ENCODE measurements at regions of chr12 and their contacts with region 1.

Region 1: GRCh38 chr12:642633-643474 is 20.4 kb downstream of the NINJ2 start:
- DNase-seq: peak; percentile 78
- H3K4me3 Mint-ChIP-seq: peak overlapping the region; percentile 84
- H3K27ac Mint-ChIP-seq: peak overlapping the region; percentile 95
- H3K4me1 Mint-ChIP-seq: peaks cover 63% of the 10 kb centered on the region
- H3K27me3 Mint-ChIP-seq: no peaks in the 10 kb centered on the region

Region 2: GRCh38 chr12:575948-576612 is 66.8 kb before region 1 on chr12:
- intact Hi-C with region 1: loop called (anchors 1 kb)
- DNase-seq: peak; percentile 81
- H3K4me3 Mint-ChIP-seq: no peak overlapping the region
- H3K27ac Mint-ChIP-seq: peak overlapping the region; percentile 80
- H3K4me1 Mint-ChIP-seq: peaks cover 33% of the 10 kb centered on the region
- H3K27me3 Mint-ChIP-seq: peaks cover 4% of the 10 kb centered on the region

Region 3: DNA sequence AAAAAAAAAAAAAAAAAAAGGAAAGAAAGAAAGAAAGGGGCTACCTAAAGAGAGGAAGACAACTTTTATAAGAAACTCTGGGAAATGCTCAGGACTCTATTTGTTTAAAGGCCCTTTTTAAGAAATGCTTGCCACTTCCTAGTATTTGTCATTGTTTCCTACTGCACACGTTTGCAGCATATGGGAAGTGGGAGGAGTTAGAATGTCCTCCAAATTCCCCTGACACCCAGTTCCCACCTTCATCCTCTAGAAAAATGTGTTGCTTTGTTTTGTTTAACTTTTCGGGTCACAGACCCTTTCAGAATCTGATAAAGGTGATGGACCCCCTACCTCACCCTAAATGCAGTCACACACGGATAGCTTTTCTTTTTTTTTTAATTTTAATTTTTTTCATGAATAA is 20.4 kb before region 1 on chr12:
- intact Hi-C with region 1: loop called (anchors 1 kb)
- DNase-seq: peak; percentile 28
- H3K4me3 Mint-ChIP-seq: peak overlapping the region; percentile 68
- H3K27ac Mint-ChIP-seq: peak overlapping the region; percentile 96
- H3K4me1 Mint-ChIP-seq: peaks cover 62% of the 10 kb centered on the region
- H3K27me3 Mint-ChIP-seq: no peaks in the 10 kb centered on the region

Region 4: GRCh38 chr12:668090-668481 is 25.2 kb after region 1 on chr12:
- intact Hi-C with region 1: loop called (anchors 1 kb)
- DNase-seq: no peak
- H3K4me3 Mint-ChIP-seq: no peak overlapping the region
- H3K27ac Mint-ChIP-seq: peak overlapping the region; percentile 67
- H3K4me1 Mint-ChIP-seq: peaks cover 79% of the 10 kb centered on the region
- H3K27me3 Mint-ChIP-seq: no peaks in the 10 kb centered on the region

Region 5: GRCh38 chr12:712172-712863 is 69.5 kb after region 1 on chr12:
- intact Hi-C with region 1: loop called (anchors 2 kb)
- DNase-seq: no peak
- H3K4me3 Mint-ChIP-seq: no peak overlapping the region
- H3K27ac Mint-ChIP-seq: peak overlapping the region; percentile 72
- H3K4me1 Mint-ChIP-seq: peaks cover 37% of the 10 kb centered on the region
- H3K27me3 Mint-ChIP-seq: no peaks in the 10 kb centered on the region

Region 6: DNA sequence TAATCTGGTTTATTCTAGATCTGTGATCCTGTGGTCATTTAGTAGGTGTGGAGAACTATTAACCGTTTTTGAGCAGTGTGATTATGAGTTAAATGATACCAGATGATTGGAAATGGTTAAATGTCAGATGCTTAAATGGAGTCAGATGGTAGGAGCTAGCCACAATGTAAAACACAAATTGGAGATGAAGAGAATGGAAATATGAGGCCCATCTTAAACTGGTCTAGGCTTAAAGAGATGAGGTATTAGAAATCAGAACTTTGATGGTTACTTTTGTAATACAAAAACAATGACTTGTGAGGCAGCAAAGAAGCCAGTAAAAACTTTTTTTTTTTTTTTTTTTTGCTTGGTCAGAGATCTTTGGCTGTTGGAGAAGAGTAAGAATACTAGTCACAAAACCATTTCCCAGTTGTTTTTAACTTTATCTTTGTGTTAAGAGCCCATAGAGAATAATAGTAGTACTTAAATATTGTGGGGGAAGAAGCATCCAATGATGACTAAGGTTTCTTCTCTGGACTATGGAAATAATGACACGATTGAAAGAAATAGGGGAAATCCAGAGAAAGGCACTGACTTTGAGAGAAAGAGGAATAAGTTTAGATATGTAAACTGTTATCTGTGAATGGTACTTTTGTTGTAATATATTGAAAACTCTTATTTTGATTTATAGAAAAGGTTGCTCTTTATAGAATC is 205.5 kb after region 1 on chr12:
- intact Hi-C with region 1: loop called (anchors 1 kb)
- DNase-seq: no peak
- H3K4me3 Mint-ChIP-seq: peak overlapping the region; percentile 13
- H3K27ac Mint-ChIP-seq: peak overlapping the region; percentile 81
- H3K4me1 Mint-ChIP-seq: peaks cover 52% of the 10 kb centered on the region
- H3K27me3 Mint-ChIP-seq: no peaks in the 10 kb centered on the region

Measured in activated T-helper 1 cell treated with anti-CD3 and anti-CD28 coated beads, Interleukin-12 subunit alpha, Interleukin-12 subunit beta, Interleukin-2, Interleukin-4 antibody, amounts not matched to agents 30 ng/mL and 10 ng/mL and 1 ng/mL, durations not matched to agents 14 hours and 24 hours and 36 hours (primary cell).